Activated CD8-positive, alpha-beta memory T cell treated with anti-CD3 and anti-CD28 coated beads, Interleukin-2, amount 10 ng/mL, durations not matched to agents 7 days and 5 days (primary cell): ENCODE measurements at regions of chr14 and their contacts with region 1.

Region 1: GRCh38 chr14:103808403-103809001 is 38.9 kb downstream of the PPP1R13B start:
- DNase-seq: peak; percentile 74
- ATAC-seq: peak; percentile 83
- H3K4me3 Mint-ChIP-seq: no peak overlapping the region
- H3K27ac Mint-ChIP-seq: no peak overlapping the region
- H3K4me1 Mint-ChIP-seq: peaks cover 9% of the 10 kb centered on the region
- H3K27me3 Mint-ChIP-seq: no peaks in the 10 kb centered on the region

Region 2: GRCh38 chr14:103724116-103724515 is 84.4 kb before region 1 on chr14:
- CTCF ChIA-PET with region 1: no interaction called
- DNase-seq: no peak
- ATAC-seq: no peak
- H3K4me3 Mint-ChIP-seq: no peak overlapping the region
- H3K27ac Mint-ChIP-seq: no peak overlapping the region
- H3K4me1 Mint-ChIP-seq: peaks cover 5% of the 10 kb centered on the region
- H3K27me3 Mint-ChIP-seq: no peaks in the 10 kb centered on the region

Region 3: GRCh38 chr14:103819503-103820307 is 11.2 kb after region 1 on chr14:
- CTCF ChIA-PET with region 1: interaction called, 16 read pairs
- DNase-seq: no peak
- ATAC-seq: no peak
- H3K4me3 Mint-ChIP-seq: no peak overlapping the region
- H3K27ac Mint-ChIP-seq: peak overlapping the region; percentile 3
- H3K4me1 Mint-ChIP-seq: peaks cover 13% of the 10 kb centered on the region
- H3K27me3 Mint-ChIP-seq: no peaks in the 10 kb centered on the region

Region 4: DNA sequence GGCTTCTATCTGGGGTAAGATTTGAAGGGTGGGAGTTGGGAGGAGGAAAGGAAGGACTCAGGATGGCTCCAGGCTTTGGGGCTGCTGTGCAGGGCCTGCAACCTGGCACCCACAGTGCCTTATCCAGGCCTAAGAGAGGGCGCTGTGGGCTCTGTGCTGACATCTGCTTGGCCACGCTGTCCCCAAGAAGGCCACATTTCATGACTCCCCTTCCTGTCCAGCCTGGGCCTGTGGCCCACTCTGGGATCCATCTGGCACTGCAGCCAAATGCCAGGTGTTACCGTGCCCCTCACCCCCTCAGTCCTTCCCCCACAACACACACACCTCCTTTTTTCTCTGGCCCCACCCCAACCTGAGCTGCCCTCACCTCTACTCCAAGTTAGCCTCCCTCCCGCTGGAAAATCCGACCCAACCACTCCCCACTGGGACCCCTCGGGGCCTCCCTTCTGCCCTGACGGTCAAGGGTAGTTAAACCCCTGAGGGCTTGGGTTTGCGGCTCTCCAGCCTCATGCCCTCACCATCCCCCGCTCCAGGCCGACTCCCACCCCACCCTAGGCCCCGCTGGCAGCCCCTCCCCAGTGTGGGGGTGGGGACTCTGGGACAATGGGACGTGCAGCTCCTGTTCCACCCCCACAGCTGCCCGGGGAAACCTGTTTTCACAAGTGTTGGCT is 46.7 kb after region 1 on chr14:
- CTCF ChIA-PET with region 1: no interaction called
- DNase-seq: no peak
- ATAC-seq: no peak
- H3K4me3 Mint-ChIP-seq: no peak overlapping the region
- H3K27ac Mint-ChIP-seq: no peak overlapping the region
- H3K4me1 Mint-ChIP-seq: peaks cover 3% of the 10 kb centered on the region
- H3K27me3 Mint-ChIP-seq: no peaks in the 10 kb centered on the region

Region 5: GRCh38 chr14:103910262-103910935 is 101.9 kb after region 1 on chr14:
- CTCF ChIA-PET with region 1: interaction called, 186 read pairs
- DNase-seq: peak; percentile 79
- ATAC-seq: peak; percentile 91
- H3K4me3 Mint-ChIP-seq: peak overlapping the region; percentile 38
- H3K27ac Mint-ChIP-seq: peak overlapping the region; percentile 63
- H3K4me1 Mint-ChIP-seq: peaks cover 17% of the 10 kb centered on the region
- H3K27me3 Mint-ChIP-seq: peaks cover 2% of the 10 kb centered on the region

Region 6: DNA sequence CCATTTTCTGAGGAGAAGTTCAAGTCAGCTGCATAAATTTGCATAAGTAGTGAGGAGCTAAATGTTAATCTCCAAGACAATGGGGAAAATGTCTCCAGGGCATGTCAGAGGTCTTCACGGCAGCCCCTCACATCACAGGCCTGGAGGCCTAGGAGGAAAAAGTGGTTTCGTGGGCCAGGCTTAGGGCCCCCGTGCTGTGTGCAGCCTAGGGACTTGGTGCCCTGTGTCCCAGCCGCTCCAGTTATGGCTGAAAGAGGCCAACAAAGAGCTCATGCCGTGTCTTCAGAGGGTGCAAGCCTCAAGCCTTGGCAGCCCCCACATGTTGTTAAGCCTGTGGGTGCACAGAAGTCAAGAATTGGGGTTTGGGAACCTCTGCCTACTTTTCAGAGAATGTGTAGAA is 175.7 kb after region 1 on chr14:
- CTCF ChIA-PET with region 1: interaction called, 10 read pairs
- DNase-seq: no peak
- ATAC-seq: no peak
- H3K4me3 Mint-ChIP-seq: no peak overlapping the region
- H3K27ac Mint-ChIP-seq: no peak overlapping the region
- H3K4me1 Mint-ChIP-seq: no peaks in the 10 kb centered on the region
- H3K27me3 Mint-ChIP-seq: peaks cover 31% of the 10 kb centered on the region